Caco-2 (cell line): ENCODE measurements at regions of chr2 and their contacts with region 1.

Region 1: DNA sequence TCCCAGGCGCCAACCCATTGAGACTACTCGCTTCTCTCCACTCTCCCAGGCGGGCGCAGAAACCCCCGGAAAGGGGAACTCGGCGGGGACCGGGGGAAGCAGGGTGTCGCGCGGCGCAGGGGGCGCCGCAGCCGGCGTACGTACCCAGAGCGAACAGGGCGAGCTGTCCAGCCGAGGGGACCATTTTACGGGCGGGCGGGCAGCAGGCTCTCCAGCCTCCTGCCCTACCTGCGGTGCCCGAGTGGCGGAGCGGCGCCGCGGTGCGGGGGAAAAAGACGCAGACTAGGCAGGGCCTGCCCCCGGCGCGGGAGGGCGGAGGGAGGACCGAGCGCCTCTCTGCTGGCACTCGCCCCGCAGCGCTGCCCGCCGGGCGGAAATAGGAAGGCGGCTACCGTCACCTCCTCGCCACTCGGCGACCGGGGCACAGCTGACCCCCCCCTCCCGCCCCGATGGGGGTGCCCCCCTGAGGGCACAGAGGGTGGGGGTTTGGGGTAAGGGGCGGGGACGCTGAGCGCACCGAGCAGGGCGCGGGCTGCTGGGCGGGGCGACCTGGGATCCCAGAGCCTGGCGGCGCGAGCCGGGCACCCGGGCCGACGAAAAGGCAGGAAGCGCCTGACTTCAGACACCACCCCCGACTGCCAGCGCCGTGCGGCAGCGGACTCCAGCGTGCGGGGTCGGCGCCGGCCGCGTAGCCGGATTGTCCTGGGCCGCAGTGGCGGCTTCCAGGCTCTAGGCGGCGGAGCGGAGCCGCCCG is at the start of gene TGFA:
- DNase-seq: peak; percentile 69 to 77
- H3K4me3 ChIP-seq: peak within 1 kb of the TSS; percentile 44
- H3K4me3 Mint-ChIP-seq: peak within 1 kb of the TSS; percentile 87
- H3K27ac Mint-ChIP-seq: peak within 1 kb of the TSS; percentile 73
- H3K4me1 ChIP-seq: peaks cover 19% of the 10 kb centered on the region
- H3K4me1 Mint-ChIP-seq: peaks cover 11% of the 10 kb centered on the region
- H3K27me3 ChIP-seq: peaks cover 7% of the 10 kb centered on the region
- H3K27me3 Mint-ChIP-seq: peaks cover 28% of the 10 kb centered on the region
- CTCF ChIP-seq: peak in 1 of 2 experiments; percentile 76
- total RNA-seq, gene TGFA: 0.32 and 0.70 TPM in 2 replicates

Region 2: DNA sequence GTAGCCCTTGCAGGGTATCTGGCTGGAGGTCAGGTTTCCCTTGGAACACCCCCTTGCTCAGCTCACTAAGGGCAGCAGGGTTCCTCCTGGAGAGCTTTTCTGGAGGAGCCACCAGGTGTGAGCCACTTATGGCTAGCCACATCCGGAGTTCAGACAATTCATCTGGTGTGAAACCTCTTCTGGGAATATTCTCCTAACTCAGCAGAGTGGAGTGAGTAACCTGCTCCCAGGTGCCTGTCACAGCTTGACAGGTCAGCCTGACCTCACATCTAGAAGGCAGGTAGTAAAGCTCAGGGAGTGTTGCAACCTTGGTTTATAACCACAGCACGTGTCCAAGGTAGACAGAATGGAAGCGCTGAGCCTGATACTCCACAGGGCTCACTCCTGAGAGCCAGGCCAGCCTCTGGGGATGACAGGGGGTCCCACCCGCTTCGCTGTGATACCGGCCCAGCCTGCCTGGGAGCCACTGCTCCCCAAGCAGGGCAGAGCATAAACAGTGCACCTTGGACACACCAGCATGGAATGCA is 62.5 kb after region 1 on chr2:
- CTCF ChIA-PET with region 1: interaction called, 12 read pairs
- POLR2A ChIA-PET with region 1: no interaction called
- intact Hi-C with region 1: loop called (anchors 1 kb)
- DNase-seq: peak; percentile 12 to 43
- H3K4me3 ChIP-seq: no peak overlapping the region
- H3K4me3 Mint-ChIP-seq: no peak overlapping the region
- H3K27ac Mint-ChIP-seq: no peak overlapping the region
- H3K4me1 ChIP-seq: no peaks in the 10 kb centered on the region
- H3K4me1 Mint-ChIP-seq: no peaks in the 10 kb centered on the region
- H3K27me3 ChIP-seq: no peaks in the 10 kb centered on the region; the same call in 1 of the 2 replicates
- H3K27me3 Mint-ChIP-seq: peaks cover 19% of the 10 kb centered on the region
- CTCF ChIP-seq: no peak

Region 3: GRCh38 chr2:70647873-70648481 is 94.2 kb after region 1 on chr2:
- CTCF ChIA-PET with region 1: no interaction called
- POLR2A ChIA-PET with region 1: no interaction called
- intact Hi-C with region 1: loop called (anchors 10 kb)
- DNase-seq: peak; percentile 72 to 83
- H3K4me3 ChIP-seq: no peak overlapping the region
- H3K4me3 Mint-ChIP-seq: no peak overlapping the region
- H3K27ac Mint-ChIP-seq: no peak overlapping the region
- H3K4me1 ChIP-seq: no peaks in the 10 kb centered on the region
- H3K4me1 Mint-ChIP-seq: no peaks in the 10 kb centered on the region
- H3K27me3 ChIP-seq: no peaks in the 10 kb centered on the region
- H3K27me3 Mint-ChIP-seq: peaks cover 12% of the 10 kb centered on the region
- CTCF ChIP-seq: peak; percentile 95 to 98